ENCODE measurements at regions of chr15 and their contacts with region 1.

Region 1: GRCh38 chr15:89230277-89230676 is 8.9 kb upstream of the RLBP1 start:
- DNase-seq: no peak
- H3K4me3 ChIP-seq: no peak overlapping the region
- H3K27ac ChIP-seq: no peak overlapping the region
- H3K4me1 ChIP-seq: no peaks in the 10 kb centered on the region
- H3K27me3 ChIP-seq: no peaks in the 10 kb centered on the region
- CTCF ChIP-seq: no peak
- EP300 ChIP-seq: no peak
- POLR2A ChIP-seq: no peak

Region 2: DNA sequence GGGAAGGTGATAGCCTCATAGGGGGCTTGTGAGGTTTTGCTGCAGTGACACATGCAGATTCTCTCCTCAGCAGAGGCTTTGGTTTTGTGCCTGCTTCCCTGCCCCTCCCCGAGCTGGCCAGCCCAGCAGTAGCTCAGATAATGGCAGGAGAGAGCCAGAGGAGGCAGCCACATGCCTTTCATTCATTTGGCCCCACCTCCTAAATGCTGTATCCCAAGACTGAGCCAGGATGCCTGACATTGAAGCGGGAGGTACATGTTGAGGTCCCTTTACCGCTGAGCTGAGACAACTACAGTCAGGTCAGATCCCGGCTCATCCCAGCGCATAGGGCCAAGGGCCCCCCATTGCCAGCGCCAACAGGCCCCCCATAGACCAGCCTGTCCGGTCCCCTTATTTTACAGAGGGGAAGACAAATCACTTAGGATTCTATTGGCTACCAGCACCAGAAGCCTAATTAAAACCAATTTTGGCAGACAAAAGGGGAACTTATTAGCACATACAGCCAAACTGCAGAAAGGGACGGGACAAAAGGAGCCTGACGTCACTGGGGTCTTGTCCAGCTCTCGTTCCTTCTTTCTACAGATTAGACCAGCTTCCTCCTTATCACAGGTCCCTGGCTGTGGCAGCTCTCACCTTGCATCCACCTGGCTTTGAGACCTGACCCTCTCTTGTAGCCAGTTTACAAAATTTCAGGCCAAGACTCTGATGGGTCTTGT is 116.4 kb after region 1 on chr15:
- intact Hi-C with region 1: loop called (anchors 10 kb)
- DNase-seq: no peak
- H3K4me3 ChIP-seq: no peak overlapping the region
- H3K27ac ChIP-seq: no peak overlapping the region
- H3K4me1 ChIP-seq: no peaks in the 10 kb centered on the region
- H3K27me3 ChIP-seq: peaks cover 0 to 75% (median 5%) of the 10 kb centered on the region in 3 donors
- CTCF ChIP-seq: no peak
- EP300 ChIP-seq: no peak
- POLR2A ChIP-seq: no peak

Measured in stomach (tissue), 19 donors.